ENCODE measurements at regions of chr10 and their contacts with region 1.

Region 1: GRCh38 chr10:114304017-114304570 is 65.0 kb downstream of the VWA2 start:
- DNase-seq: peak; percentile 79
- ATAC-seq: peak; percentile 55
- H3K4me3 ChIP-seq: peak overlapping the region; percentile 65 to 86 (median 76)
- H3K4me3 Mint-ChIP-seq: peak overlapping the region; percentile 91
- H3K27ac ChIP-seq: peak overlapping the region; percentile 5 to 53
- H3K27ac Mint-ChIP-seq: peak overlapping the region; percentile 75
- H3K4me1 ChIP-seq: peaks cover 0 to 10% of the 10 kb centered on the region in 2 donors
- H3K4me1 Mint-ChIP-seq: peaks cover 13% of the 10 kb centered on the region
- H3K27me3 ChIP-seq: no peaks in the 10 kb centered on the region
- H3K27me3 Mint-ChIP-seq: no peaks in the 10 kb centered on the region
- CTCF ChIP-seq: peak; percentile 80

Region 2: GRCh38 chr10:113802997-113803396 is 501.1 kb before region 1 on chr10:
- CTCF ChIA-PET with region 1: interaction called, 6 read pairs
- POLR2A ChIA-PET with region 1: no interaction called
- intact Hi-C with region 1: loop called (anchors 1 kb)
- DNase-seq: peak; percentile 12
- ATAC-seq: no peak
- H3K4me3 ChIP-seq: no peak overlapping the region
- H3K4me3 Mint-ChIP-seq: no peak overlapping the region
- H3K27ac ChIP-seq: no peak overlapping the region
- H3K27ac Mint-ChIP-seq: no peak overlapping the region
- H3K4me1 ChIP-seq: peaks cover 3 to 5% of the 10 kb centered on the region in 2 donors
- H3K4me1 Mint-ChIP-seq: peaks cover 4% of the 10 kb centered on the region
- H3K27me3 ChIP-seq: peaks cover 0 to 3% (median 0%) of the 10 kb centered on the region in 4 experiments
- H3K27me3 Mint-ChIP-seq: peaks cover 10% of the 10 kb centered on the region
- CTCF ChIP-seq: no peak

Region 3: DNA sequence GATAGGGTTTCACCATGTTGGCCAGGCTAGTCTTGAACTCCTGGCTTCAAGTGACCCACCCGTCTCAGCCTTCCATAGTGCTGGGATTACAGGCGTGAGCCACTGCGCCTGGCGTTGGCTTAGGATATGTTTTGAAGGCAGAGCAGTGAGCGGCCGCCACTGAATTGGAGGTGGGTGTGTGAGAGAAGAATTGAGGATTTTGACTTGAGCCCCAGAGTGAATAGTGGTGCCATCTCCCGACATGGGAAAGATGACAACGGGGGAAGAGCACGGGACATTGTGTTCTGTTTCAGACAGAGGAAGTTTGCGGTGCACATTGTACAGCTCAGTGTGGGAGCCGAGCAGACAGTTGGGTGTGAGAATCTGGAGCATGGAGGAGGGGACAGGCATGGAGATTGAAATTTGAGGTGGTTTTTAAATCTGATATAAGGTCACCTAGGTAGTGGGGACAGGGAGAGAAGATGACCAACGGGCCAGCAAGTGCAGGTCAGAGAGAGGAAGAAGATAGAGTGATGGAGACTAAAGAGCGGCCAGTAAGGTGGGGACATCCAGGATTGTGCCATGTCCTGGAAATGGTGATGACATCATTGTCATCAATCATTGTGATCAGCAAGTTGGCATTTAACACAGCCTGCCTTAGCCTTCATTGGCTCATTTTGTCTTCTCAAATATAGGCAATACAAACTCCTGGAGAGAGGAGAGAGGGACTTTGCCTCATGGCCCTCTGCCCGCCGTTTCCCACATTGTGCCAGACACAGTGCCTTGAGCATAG is 29.2 kb before region 1 on chr10:
- CTCF ChIA-PET with region 1: no interaction called
- POLR2A ChIA-PET with region 1: no interaction called
- intact Hi-C with region 1: no loop called
- DNase-seq: no peak
- ATAC-seq: no peak
- H3K4me3 ChIP-seq: no peak overlapping the region
- H3K4me3 Mint-ChIP-seq: no peak overlapping the region
- H3K27ac ChIP-seq: no peak overlapping the region
- H3K27ac Mint-ChIP-seq: no peak overlapping the region
- H3K4me1 ChIP-seq: no peaks in the 10 kb centered on the region
- H3K4me1 Mint-ChIP-seq: no peaks in the 10 kb centered on the region
- H3K27me3 ChIP-seq: peaks cover 0 to 6% (median 0%) of the 10 kb centered on the region in 4 experiments
- H3K27me3 Mint-ChIP-seq: peaks cover 27% of the 10 kb centered on the region
- CTCF ChIP-seq: no peak

Region 4: DNA sequence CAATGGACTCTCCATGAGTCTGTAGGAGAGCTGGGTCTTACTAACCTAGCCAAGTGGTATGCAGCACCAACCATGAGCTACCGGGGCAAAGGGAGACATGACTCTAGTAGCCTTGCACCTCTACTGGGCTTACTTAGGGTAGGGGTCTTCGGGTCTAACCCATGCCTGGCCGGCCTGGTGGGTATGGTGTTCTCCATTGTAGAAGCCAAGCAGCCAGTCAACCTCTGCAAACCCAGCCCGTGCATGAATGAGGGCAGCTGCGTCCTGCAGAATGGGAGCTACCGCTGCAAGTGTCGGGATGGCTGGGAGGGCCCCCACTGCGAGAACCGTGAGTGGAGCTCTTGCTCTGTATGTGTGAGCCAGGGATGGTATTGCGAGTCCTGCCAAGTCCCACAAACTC is 14.1 kb before region 1 on chr10:
- CTCF ChIA-PET with region 1: interaction called, 10 read pairs
- POLR2A ChIA-PET with region 1: no interaction called
- intact Hi-C with region 1: no loop called
- DNase-seq: no peak
- ATAC-seq: no peak
- H3K4me3 ChIP-seq: no peak overlapping the region
- H3K4me3 Mint-ChIP-seq: no peak overlapping the region
- H3K27ac ChIP-seq: no peak overlapping the region
- H3K27ac Mint-ChIP-seq: no peak overlapping the region
- H3K4me1 ChIP-seq: no peaks in the 10 kb centered on the region
- H3K4me1 Mint-ChIP-seq: no peaks in the 10 kb centered on the region
- H3K27me3 ChIP-seq: no peaks in the 10 kb centered on the region
- H3K27me3 Mint-ChIP-seq: no peaks in the 10 kb centered on the region
- CTCF ChIP-seq: no peak

Region 5: GRCh38 chr10:114470956-114471905 is 167.1 kb after region 1 on chr10:
- CTCF ChIA-PET with region 1: interaction called, 30 read pairs
- POLR2A ChIA-PET with region 1: no interaction called
- intact Hi-C with region 1: loop called (anchors 1 kb)
- DNase-seq: peak; percentile 83
- ATAC-seq: peak; percentile 90
- H3K4me3 ChIP-seq: no peak overlapping the region
- H3K4me3 Mint-ChIP-seq: no peak overlapping the region
- H3K27ac ChIP-seq: no peak overlapping the region
- H3K27ac Mint-ChIP-seq: no peak overlapping the region
- H3K4me1 ChIP-seq: peaks cover 0 to 4% of the 10 kb centered on the region in 2 donors
- H3K4me1 Mint-ChIP-seq: peaks cover 25% of the 10 kb centered on the region
- H3K27me3 ChIP-seq: no peaks in the 10 kb centered on the region
- H3K27me3 Mint-ChIP-seq: no peaks in the 10 kb centered on the region
- CTCF ChIP-seq: peak; percentile 96

Region 6: DNA sequence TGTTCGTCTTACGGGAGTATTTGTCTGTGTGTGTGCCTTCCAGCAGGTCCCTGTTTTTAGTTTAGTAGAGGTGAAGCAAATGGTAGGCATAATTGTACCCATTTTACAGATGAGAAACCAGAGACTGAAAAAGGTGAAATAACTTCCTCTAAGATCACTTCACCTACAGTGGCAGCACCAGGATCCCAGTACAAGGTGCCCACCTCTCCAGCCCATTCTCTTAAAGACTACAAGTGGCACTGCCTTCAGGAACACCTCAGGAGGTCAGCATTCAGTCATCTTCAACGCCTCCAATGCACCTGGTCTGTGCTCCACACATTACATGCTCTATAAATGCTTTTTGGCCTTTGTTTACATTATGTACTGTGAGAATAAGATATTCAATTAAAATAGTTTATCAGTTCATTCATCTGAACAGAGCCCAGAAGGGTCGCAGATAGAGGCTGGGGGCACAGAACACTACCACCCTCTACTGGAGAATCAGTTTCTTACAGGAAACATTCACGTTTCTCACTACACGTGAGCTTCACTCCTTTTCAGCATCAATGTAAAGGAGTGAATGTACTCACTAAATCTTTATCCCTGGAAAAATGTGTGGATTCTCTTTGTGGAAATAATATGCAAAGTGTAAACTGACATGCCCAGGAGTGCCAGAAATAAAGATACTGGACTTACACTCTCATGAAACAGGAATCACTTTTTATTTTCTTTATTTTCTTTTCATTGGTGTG is 399.4 kb after region 1 on chr10:
- CTCF ChIA-PET with region 1: interaction called, 28 read pairs
- POLR2A ChIA-PET with region 1: no interaction called
- intact Hi-C with region 1: loop called (anchors 1 kb)
- DNase-seq: peak; percentile 48
- ATAC-seq: peak; percentile 54
- H3K4me3 ChIP-seq: no peak overlapping the region
- H3K4me3 Mint-ChIP-seq: no peak overlapping the region
- H3K27ac ChIP-seq: no peak overlapping the region
- H3K27ac Mint-ChIP-seq: no peak overlapping the region
- H3K4me1 ChIP-seq: no peaks in the 10 kb centered on the region
- H3K4me1 Mint-ChIP-seq: no peaks in the 10 kb centered on the region
- H3K27me3 ChIP-seq: peaks cover 0 to 8% (median 0%) of the 10 kb centered on the region in 4 experiments
- H3K27me3 Mint-ChIP-seq: peaks cover 13% of the 10 kb centered on the region
- CTCF ChIP-seq: peak; percentile 67

Region 7: GRCh38 chr10:114821293-114821914 is 517.3 kb after region 1 on chr10 and contains the start of gene FHIP2A:
- CTCF ChIA-PET with region 1: interaction called, 13 read pairs
- POLR2A ChIA-PET with region 1: no interaction called
- intact Hi-C with region 1: no loop called
- DNase-seq: peak; percentile 90
- ATAC-seq: peak; percentile 93
- H3K4me3 ChIP-seq: peak within 1 kb of the TSS; percentile 53 to 86 (median 78)
- H3K4me3 Mint-ChIP-seq: peak within 1 kb of the TSS; percentile 94
- H3K27ac ChIP-seq: peak within 1 kb of the TSS; percentile 57 to 83
- H3K27ac Mint-ChIP-seq: peak within 1 kb of the TSS; percentile 96
- H3K4me1 ChIP-seq: peaks cover 6 to 13% of the 10 kb centered on the region in 2 donors
- H3K4me1 Mint-ChIP-seq: peaks cover 29% of the 10 kb centered on the region
- H3K27me3 ChIP-seq: no peaks in the 10 kb centered on the region
- H3K27me3 Mint-ChIP-seq: no peaks in the 10 kb centered on the region
- CTCF ChIP-seq: peak; percentile 64
- total RNA-seq, gene FHIP2A: 18.2 and 28.6 TPM in 2 replicates

Measured in B cell (primary cell).